Activated T-helper 2 cell treated with anti-CD3 and anti-CD28 coated beads, Interferon-gamma antibody, Interleukin-2, Interleukin-4, amounts not matched to agents 10 μg/mL and 5 μg/mL and 100 μg/mL, durations not matched to agents 14 hours and 24 hours and 36 hours (primary cell): ENCODE measurements at regions of chr11 and their contacts with region 1.

Region 1: GRCh38 chr11:46346886-46347636 is at the start of gene DGKZ:
- DNase-seq: peak; percentile 90
- H3K4me3 Mint-ChIP-seq: peak within 1 kb of the TSS; percentile 84
- H3K27ac Mint-ChIP-seq: peak within 1 kb of the TSS; percentile 83
- H3K4me1 Mint-ChIP-seq: peaks cover 52% of the 10 kb centered on the region
- H3K27me3 Mint-ChIP-seq: peaks cover 9% of the 10 kb centered on the region
- total RNA-seq, gene DGKZ: 82.3 and 86.1 TPM in 2 replicates

Region 2: GRCh38 chr11:46330890-46331652 is 16.0 kb before region 1 on chr11:
- intact Hi-C with region 1: loop called (anchors 2 kb)
- DNase-seq: peak; percentile 41
- H3K4me3 Mint-ChIP-seq: peak overlapping the region; percentile 68
- H3K27ac Mint-ChIP-seq: no peak overlapping the region
- H3K4me1 Mint-ChIP-seq: peaks cover 31% of the 10 kb centered on the region
- H3K27me3 Mint-ChIP-seq: peaks cover 61% of the 10 kb centered on the region

Region 3: DNA sequence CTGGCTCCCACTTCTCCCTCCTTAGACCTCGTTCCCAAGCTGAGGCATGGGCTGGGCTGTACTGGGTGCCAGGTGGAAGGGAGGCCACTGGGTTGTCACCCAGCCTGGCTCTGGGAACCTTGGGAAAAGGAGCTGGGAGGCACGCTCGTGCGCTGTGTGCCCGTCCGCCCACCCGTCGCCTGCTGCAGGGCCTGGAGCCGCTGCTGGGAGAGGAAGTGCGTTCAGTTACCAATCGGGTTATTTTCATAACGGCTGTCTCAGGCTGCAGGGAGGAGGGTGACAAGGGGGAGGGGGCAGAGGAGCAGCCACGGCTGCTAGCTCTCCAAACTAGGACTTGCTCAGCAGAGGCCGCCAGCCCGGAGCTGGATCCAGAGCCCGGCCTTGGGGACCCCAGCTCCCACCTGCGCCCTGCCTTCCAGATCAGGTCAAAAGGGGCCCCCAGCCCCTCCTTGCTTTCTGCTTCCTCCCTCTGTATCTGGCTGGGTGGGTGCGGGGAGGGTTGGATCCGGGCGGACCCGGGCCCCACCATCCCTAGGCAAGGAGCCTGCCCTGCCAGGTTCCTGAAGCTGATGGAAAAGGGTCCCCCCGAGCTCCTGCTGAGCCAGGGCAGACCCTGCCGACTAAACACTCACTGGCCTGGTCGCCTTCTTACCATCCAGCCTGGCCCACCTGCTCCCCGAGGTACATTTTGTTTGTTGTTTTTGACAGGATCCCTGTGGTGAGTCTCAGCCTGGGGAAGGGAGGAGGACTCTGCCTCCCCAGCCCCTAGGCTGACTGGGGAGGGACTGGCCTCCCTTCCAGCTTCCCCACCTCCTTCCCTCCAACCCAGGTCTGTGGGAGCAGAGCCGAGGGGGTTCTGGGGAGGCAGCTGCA is 14.5 kb after region 1 on chr11:
- intact Hi-C with region 1: loop called (anchors 1 kb)
- DNase-seq: peak; percentile 63
- H3K4me3 Mint-ChIP-seq: peak overlapping the region; percentile 80
- H3K27ac Mint-ChIP-seq: peak overlapping the region; percentile 86
- H3K4me1 Mint-ChIP-seq: peaks cover 33% of the 10 kb centered on the region
- H3K27me3 Mint-ChIP-seq: no peaks in the 10 kb centered on the region

Region 4: DNA sequence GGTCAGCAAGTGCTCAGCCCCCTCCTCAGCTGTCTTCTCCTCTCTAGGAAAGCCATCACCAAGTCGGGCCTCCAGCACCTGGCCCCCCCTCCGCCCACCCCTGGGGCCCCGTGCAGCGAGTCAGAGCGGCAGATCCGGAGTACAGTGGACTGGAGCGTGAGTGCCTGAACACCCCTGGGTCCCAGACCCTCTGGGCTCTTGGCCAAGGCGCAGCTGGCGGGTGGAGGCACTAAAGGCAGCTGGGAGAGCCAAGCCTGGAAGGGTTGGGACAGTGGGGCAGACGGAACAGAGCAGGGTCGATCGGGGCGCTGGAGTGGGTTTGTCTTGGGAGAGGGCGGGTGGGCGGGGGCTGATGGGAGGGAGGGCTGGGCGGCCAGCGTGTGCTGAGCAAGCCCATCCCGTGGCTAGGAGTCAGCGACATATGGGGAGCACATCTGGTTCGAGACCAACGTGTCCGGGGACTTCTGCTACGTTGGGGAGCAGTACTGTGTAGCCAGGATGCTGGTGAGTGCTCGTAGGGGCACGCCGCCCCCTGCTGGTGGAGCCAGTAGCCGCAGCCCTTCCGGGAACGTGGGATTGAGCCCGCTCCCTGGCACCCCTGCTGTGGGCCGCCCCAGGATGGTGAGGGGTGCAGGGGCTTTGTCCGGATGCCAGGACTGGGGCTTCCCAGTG is 20.3 kb after region 1 on chr11:
- intact Hi-C with region 1: loop called (anchors 1 kb)
- DNase-seq: peak; percentile 58
- H3K4me3 Mint-ChIP-seq: no peak overlapping the region
- H3K27ac Mint-ChIP-seq: no peak overlapping the region
- H3K4me1 Mint-ChIP-seq: peaks cover 17% of the 10 kb centered on the region
- H3K27me3 Mint-ChIP-seq: no peaks in the 10 kb centered on the region

Region 5: DNA sequence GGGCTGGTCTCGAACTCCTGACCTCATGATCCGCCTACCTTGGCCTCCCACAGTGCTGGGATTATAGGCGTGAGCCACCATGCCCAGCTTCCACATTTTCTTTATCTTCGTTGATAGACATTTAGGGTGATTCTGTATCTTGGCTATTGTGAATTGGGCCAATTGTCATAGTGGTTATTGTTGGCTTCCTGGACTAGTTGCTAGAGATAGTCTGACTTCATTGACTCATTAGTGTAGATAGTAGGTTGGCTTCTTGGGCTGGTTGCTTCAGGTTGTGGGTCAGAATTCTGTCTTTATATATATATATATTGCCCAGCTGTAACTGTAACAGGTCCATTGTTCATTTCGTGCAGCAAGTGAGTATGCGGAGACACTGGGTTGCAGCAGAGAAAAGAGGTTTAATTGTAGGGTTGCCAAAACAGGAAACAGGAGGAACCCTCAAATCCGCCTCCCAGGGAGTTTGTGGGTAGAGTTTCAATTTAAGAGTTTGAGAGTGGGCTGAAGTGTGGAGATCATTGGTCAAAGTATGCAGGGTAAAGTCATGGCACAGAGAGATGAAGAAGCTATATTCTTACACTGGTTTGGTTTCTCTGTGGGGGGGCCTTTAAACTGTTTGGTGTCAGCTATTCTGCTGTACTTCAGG is 292.3 kb after region 1 on chr11:
- intact Hi-C with region 1: no loop called
- DNase-seq: no peak
- H3K4me3 Mint-ChIP-seq: no peak overlapping the region
- H3K27ac Mint-ChIP-seq: no peak overlapping the region
- H3K4me1 Mint-ChIP-seq: peaks cover 8% of the 10 kb centered on the region
- H3K27me3 Mint-ChIP-seq: no peaks in the 10 kb centered on the region